ENCODE measurements at regions of chr5 and their contacts with region 1.

Region 1: GRCh38 chr5:16456103-16456832 is 9.3 kb downstream of the ZNF622 start:
- DNase-seq: peak; percentile 61
- ATAC-seq: peak; percentile 89
- H3K4me3 Mint-ChIP-seq: peak overlapping the region; percentile 34
- H3K27ac Mint-ChIP-seq: peak overlapping the region; percentile 79
- H3K4me1 Mint-ChIP-seq: peaks cover 52% of the 10 kb centered on the region
- H3K27me3 Mint-ChIP-seq: no peaks in the 10 kb centered on the region

Region 2: DNA sequence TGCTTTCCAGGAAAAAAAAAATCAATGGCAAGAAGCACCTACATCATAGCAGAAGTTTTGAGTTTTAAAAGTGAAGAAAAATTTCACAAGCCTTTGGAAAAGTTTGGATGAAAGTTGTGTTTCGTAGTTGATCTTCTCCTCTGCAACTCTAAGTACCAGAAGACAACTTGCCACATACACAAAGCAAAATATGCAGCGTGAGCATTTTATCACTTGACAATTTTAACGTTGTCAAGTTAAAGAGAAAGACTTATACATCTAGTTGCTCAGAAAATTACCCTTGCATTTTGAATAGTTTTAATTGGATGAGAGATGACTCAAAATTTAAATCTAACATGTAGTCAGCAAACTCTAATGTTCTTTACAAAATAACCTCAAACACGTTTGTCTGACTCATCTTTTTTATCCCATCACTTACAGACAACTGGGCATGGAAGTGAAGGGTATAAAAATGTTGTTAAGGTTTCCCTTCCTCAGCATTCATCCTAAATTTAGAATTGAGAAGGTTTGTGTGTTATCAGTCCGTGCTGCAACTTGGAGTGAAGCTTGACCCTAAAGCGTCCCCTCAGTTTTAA is 490.1 kb before region 1 on chr5:
- CTCF ChIA-PET with region 1: no interaction called
- POLR2A ChIA-PET with region 1: no interaction called
- intact Hi-C with region 1: no loop called
- DNase-seq: no peak
- ATAC-seq: no peak
- H3K4me3 Mint-ChIP-seq: no peak overlapping the region
- H3K27ac Mint-ChIP-seq: no peak overlapping the region
- H3K4me1 Mint-ChIP-seq: no peaks in the 10 kb centered on the region
- H3K27me3 Mint-ChIP-seq: no peaks in the 10 kb centered on the region

Region 3: DNA sequence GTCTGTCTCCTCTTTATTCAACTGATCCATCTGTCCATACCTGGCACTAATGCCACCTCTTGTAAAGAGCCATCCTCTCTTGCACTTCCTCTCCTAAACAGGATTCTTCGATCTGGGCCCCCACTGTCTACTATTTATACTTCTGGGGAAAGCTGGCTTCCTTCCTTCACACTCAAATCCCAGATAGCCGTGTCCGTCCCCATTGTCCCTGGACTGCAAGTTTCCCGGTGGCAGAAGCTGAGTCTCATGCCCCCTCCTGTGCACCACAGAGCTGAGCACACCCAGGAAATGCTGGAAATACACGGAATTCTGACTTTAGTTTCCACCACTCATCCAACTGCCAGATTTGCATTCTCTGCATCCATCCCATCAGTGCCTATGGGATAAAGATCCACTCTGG is 360.7 kb before region 1 on chr5:
- CTCF ChIA-PET with region 1: no interaction called
- POLR2A ChIA-PET with region 1: no interaction called
- intact Hi-C with region 1: no loop called
- DNase-seq: no peak
- ATAC-seq: no peak
- H3K4me3 Mint-ChIP-seq: no peak overlapping the region
- H3K27ac Mint-ChIP-seq: no peak overlapping the region
- H3K4me1 Mint-ChIP-seq: no peaks in the 10 kb centered on the region
- H3K27me3 Mint-ChIP-seq: peaks cover 2% of the 10 kb centered on the region

Region 4: GRCh38 chr5:16160706-16161105 is 295.6 kb before region 1 on chr5:
- CTCF ChIA-PET with region 1: interaction called, 37 read pairs
- POLR2A ChIA-PET with region 1: no interaction called
- intact Hi-C with region 1: loop called (anchors 1 kb)
- DNase-seq: peak; percentile 35
- ATAC-seq: peak; percentile 63
- H3K4me3 Mint-ChIP-seq: no peak overlapping the region
- H3K27ac Mint-ChIP-seq: no peak overlapping the region
- H3K4me1 Mint-ChIP-seq: no peaks in the 10 kb centered on the region
- H3K27me3 Mint-ChIP-seq: no peaks in the 10 kb centered on the region

Region 5: GRCh38 chr5:16471387-16471786 is 15.1 kb after region 1 on chr5:
- CTCF ChIA-PET with region 1: interaction called, 17 read pairs
- POLR2A ChIA-PET with region 1: interaction called, 5 read pairs
- intact Hi-C with region 1: no loop called
- DNase-seq: no peak
- ATAC-seq: no peak
- H3K4me3 Mint-ChIP-seq: no peak overlapping the region
- H3K27ac Mint-ChIP-seq: no peak overlapping the region
- H3K4me1 Mint-ChIP-seq: peaks cover 42% of the 10 kb centered on the region
- H3K27me3 Mint-ChIP-seq: no peaks in the 10 kb centered on the region

Region 6: GRCh38 chr5:16477541-16477940 is 21.3 kb after region 1 on chr5:
- CTCF ChIA-PET with region 1: interaction called, 17 read pairs
- POLR2A ChIA-PET with region 1: no interaction called
- intact Hi-C with region 1: no loop called
- DNase-seq: no peak
- ATAC-seq: no peak
- H3K4me3 Mint-ChIP-seq: no peak overlapping the region
- H3K27ac Mint-ChIP-seq: no peak overlapping the region
- H3K4me1 Mint-ChIP-seq: peaks cover 7% of the 10 kb centered on the region
- H3K27me3 Mint-ChIP-seq: no peaks in the 10 kb centered on the region

Region 7: DNA sequence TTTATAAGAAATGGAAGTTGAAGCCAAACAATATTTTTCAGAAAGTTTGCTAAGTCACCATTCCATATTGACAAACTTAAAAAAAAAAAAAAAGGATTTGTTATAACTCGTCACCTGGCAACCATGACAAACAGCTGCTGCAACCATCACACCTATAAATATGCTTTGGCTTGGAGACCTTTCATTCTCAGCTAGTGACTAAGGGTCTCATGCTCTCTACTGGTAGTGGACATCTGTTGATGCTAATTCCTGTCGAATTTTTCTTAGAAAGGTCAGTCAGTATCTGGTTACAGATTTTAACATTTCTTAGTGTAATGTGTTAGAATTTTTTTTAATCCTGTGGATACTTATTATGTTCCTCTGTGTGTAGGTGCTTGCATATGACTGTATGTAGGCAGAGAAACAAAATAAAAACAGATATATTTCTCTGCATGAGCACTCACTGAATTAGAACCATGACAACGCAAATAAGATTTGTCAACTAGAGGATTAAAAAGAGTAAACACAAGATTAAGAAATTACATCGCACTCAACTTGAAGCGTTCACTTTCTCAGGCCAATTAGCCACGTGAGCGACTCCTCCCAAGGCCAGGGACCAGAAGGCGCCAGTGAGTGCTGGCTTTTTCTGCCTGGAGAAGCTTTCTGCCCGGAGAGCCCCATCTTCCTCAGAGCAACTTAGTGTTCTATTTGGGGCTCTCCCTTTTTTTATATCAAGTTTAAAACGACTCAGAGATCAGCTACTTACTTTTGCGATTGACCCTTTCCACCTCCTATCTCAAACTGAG is 36.3 kb after region 1 on chr5:
- CTCF ChIA-PET with region 1: no interaction called
- POLR2A ChIA-PET with region 1: no interaction called
- intact Hi-C with region 1: no loop called
- DNase-seq: no peak
- ATAC-seq: peak; percentile 42
- H3K4me3 Mint-ChIP-seq: no peak overlapping the region
- H3K27ac Mint-ChIP-seq: no peak overlapping the region
- H3K4me1 Mint-ChIP-seq: peaks cover 20% of the 10 kb centered on the region
- H3K27me3 Mint-ChIP-seq: no peaks in the 10 kb centered on the region

Region 8: GRCh38 chr5:16809395-16810207 is 353.3 kb after region 1 on chr5:
- CTCF ChIA-PET with region 1: no interaction called
- POLR2A ChIA-PET with region 1: no interaction called
- intact Hi-C with region 1: no loop called
- DNase-seq: no peak
- ATAC-seq: no peak
- H3K4me3 Mint-ChIP-seq: no peak overlapping the region
- H3K27ac Mint-ChIP-seq: no peak overlapping the region
- H3K4me1 Mint-ChIP-seq: peaks cover 4% of the 10 kb centered on the region
- H3K27me3 Mint-ChIP-seq: peaks cover 11% of the 10 kb centered on the region

Measured in activated CD4-positive, alpha-beta T cell treated with anti-CD3 and anti-CD28 coated beads for 36 hours (primary cell).